ENCODE measurements at regions of chr19 and their contacts with region 1.

Region 1: DNA sequence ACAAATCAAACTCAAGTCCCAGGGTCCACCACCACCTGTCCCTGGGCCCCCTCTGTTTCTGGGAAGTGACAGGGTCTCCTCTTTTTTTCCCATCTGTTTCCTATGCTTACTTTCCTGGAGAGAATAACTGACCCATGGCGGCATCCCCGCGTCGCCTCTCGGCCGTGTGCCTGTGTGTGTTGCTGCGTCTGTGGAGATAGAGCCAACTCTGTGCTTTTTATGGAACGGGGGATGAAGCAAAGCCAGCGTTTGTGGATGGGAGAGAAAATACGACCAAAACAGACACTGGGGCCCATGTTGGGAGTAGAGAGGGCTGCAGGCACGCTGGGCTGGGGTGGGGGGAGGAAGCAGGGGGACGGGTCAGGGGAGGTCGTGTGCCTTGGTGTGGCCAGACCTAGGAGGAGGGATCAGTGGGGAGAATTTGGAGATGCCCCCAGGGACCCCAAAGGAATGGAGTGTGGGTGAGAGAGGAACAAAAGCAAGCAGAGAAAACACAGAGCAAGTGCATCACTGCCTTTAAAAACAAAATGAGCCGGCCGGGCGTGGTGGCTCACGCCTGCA is 16.6 kb downstream of the PLK5 start:
- DNase-seq: no peak
- ATAC-seq: peak in 7 of 8 donors; percentile 43 to 79 (median 67)
- H3K4me3 ChIP-seq: no peak overlapping the region
- H3K27ac ChIP-seq: peak overlapping the region in 2 of 10 donors; percentile 44 to 58
- H3K4me1 ChIP-seq: peaks cover 0 to 22% (median 4%) of the 10 kb centered on the region in 9 donors
- H3K27me3 ChIP-seq: peaks cover 0 to 23% (median under 1%) of the 10 kb centered on the region in 7 donors
- CTCF ChIP-seq: no peak

Region 2: DNA sequence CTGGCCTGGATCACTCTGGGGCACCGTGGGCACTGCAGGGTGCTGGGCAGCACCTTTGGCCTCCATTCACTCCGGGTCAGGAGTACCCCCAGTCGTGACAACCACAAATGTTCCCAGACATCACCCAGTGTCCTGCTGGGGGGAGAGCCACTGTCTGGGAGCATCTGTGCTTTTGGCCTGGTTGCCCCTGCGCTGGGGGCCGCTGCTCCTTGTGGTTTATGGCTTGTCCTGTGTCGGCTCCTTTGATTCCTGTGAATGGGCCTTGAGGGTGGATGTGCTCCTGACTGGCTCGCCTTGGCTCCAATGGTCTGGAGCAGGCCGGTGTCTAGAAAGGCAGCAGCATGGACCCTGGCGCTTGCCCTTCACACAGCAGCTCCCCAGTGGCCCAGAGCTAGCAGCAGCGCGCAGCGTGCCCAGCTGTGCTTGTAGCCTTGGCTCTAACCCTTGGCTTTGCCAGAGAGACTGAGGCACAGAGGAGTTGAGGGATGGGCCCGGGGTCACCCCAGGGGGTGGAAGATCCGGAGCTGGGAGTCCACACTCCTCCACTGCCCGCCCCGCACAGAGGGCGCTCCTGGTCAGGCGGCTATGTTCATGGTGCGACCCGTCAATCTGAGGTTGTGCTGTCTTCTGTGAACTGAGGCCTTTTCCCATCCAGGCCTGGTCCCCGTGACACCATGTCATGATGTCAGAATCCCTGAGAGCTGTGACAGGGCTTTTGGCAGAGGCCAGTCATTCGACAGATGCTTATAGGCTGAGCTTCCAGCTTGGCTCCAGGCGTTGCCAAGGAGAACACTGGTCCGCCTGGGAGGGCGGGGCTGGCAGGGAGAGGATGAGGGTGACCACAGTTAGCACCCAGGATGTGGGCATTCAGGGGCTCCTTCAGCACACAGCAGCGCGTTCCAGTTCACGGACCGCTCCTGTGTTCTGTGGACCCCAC is 128.9 kb before region 1 on chr19:
- intact Hi-C with region 1: no loop called
- DNase-seq: peak; percentile 75 to 87
- ATAC-seq: peak; percentile 2 to 57 (median 38)
- H3K4me3 ChIP-seq: peak overlapping the region in 3 of 10 donors; percentile 11 to 24 (median 13)
- H3K27ac ChIP-seq: peak overlapping the region in 9 of 10 donors; percentile 67 to 99 (median 79)
- H3K4me1 ChIP-seq: peaks cover 51 to 84% (median 80%) of the 10 kb centered on the region in 9 donors
- H3K27me3 ChIP-seq: no peaks in the 10 kb centered on the region
- CTCF ChIP-seq: no peak

Region 3: GRCh38 chr19:1789261-1790041 is 249.0 kb after region 1 on chr19:
- intact Hi-C with region 1: loop called in 2 of 10 experiments (anchors 10 kb)
- DNase-seq: no peak
- ATAC-seq: peak in 6 of 8 donors; percentile 24 to 42 (median 31)
- H3K4me3 ChIP-seq: peak overlapping the region in 8 of 10 donors; percentile 7 to 44 (median 32)
- H3K27ac ChIP-seq: peak overlapping the region in 1 of 10 donors; percentile 44
- H3K4me1 ChIP-seq: peaks cover 0 to 9% (median 5%) of the 10 kb centered on the region in 9 donors
- H3K27me3 ChIP-seq: peaks cover 0 to 48% (median 41%) of the 10 kb centered on the region in 7 donors
- CTCF ChIP-seq: no peak